ENCODE measurements at regions of chr15 and their contacts with region 1.

Region 1: GRCh38 chr15:83248151-83249029 is 36.1 kb downstream of the BNC1 start:
- DNase-seq: no peak

Region 2: DNA sequence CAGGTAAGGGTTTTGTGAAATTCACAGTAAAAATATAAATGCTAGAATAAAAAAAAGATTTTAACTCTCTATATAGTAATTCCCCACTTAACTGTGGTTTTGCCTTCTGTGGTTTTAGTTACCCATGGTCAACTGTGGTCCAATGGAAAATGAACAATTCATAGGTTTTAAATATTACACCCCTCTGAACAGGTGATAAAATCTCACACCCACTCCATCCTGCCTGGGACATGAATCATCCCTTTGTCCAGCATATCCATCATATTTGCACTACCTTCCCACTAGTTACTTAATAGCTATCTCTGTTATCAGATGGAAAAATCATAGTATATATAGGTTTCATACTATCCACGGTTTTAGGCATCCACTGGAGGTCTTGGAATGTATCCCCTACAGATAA is 90.0 kb before region 1 on chr15:
- intact Hi-C with region 1: no loop called
- DNase-seq: no peak

Region 3: GRCh38 chr15:83372420-83372891 is 124.1 kb after region 1 on chr15:
- intact Hi-C with region 1: loop called (anchors 10 kb)
- DNase-seq: no peak

Region 4: GRCh38 chr15:83436458-83437158 is 188.2 kb after region 1 on chr15:
- intact Hi-C with region 1: loop called (anchors 5 kb)
- DNase-seq: no peak

Region 5: DNA sequence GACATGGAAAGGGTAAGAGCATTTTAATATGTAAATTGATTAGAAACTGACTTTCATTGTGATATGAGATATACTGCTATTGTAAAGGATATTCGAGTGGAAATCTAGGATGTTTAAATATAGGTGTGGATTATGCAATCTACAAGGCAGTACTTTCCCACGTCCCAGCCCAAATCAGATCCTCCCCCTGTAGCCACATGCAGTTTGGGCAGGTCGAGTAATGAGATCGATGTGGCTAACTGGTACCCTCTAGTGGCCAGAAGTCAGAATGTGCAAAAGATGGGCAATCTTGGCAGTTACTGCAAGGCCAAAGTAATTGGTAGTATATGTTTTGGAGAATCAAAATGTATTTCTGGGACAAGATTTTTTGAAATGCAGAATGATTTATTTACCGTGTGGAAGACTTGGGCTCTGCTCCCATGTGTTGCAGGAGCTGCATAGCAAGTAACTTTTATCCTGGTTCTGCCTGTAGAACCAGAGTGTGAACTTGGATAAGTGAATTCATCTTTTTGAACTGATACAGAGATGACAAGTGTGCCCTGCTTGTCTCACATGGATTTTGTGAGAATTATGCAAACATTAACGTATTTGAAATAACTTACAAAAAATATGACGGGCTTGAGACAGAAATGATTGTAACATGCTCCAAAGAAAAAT is 311.0 kb after region 1 on chr15:
- intact Hi-C with region 1: loop called (anchors 2 kb)
- DNase-seq: peak; percentile 44

Measured in cardiac septum (tissue), 1 donor.